ENCODE measurements at regions of chr3 and their contacts with region 1.

Region 1: DNA sequence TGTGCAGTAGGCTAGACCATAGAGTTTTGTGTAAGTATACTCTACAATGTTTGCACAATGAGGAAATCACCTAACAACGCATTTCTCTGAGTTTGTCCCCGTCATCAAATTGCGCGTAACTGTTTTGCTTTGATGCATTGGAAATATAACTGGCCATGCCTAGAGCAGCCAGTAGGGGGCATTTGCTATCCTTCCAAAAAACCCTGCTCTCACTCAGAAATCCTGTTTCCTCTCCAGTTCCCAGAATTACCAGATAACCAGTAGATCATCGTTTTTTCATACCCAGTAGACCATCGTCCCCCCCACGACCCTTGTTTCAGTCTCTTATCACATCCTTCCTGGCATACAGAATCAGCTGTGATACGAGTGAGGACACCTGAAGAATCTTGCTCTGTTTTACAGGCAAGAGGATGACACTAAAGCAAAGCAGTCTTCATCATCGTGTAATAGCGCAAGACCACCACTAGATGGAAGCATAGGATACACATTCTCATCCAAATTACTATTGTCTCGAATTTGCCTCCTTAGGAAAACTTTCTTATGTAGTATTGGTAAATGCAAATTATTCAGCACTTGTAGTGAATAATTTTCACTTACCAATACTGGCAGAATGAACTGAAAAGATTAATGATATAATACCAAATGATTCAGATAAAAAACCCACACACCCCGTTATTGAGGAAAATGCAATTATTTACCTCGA is 4.4 kb upstream of the GABRR3 start:
- DNase-seq: peak; percentile 81
- H3K4me3 Mint-ChIP-seq: peak overlapping the region; percentile 77
- H3K27ac Mint-ChIP-seq: peak overlapping the region; percentile 91
- H3K4me1 Mint-ChIP-seq: peaks cover 13% of the 10 kb centered on the region
- H3K27me3 Mint-ChIP-seq: peaks cover 13% of the 10 kb centered on the region

Region 2: DNA sequence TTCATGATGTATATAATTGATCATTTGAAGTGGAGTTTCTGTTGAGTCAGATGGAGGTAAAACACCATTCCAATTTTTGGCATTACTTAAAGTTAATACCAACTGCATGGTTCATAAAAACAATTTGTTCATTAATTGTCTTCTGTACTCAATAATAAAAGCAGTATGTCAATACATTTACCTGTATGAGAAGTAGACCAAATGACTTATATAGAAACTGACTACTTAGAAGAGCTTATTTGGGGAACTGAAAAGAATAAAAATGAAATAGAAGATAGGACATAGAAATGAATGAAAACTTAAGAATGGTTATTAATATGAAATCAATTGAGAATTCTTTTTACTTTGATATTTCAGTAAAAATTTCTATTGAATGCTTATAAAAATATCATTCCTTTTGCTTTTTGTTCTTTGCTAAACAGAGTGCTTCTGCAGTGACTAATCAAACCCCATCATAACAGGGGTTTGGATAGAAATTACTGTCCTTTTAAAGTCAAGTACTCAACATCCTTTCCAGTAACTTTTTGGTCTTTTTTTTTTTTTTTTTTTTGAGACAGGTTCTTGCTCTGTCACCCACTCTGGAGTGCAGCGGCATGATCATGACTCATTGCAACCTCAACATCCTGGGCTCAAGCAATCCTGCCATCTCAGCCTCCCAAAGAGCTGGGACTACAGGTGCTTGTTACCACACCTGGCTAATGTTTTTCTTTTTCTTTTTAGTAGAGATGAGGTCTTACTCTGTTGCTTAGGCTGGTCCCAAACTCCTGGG is 224.1 kb before region 1 on chr3:
- CTCF ChIA-PET with region 1: interaction called, 4 read pairs
- POLR2A ChIA-PET with region 1: no interaction called
- intact Hi-C with region 1: loop called (anchors 2 kb)
- DNase-seq: peak; percentile 73
- H3K4me3 Mint-ChIP-seq: no peak overlapping the region
- H3K27ac Mint-ChIP-seq: peak overlapping the region; percentile 65
- H3K4me1 Mint-ChIP-seq: peaks cover 15% of the 10 kb centered on the region
- H3K27me3 Mint-ChIP-seq: no peaks in the 10 kb centered on the region

Region 3: GRCh38 chr3:98086873-98087272 is 47.4 kb after region 1 on chr3 and contains the start of gene OR5AC2:
- CTCF ChIA-PET with region 1: no interaction called
- POLR2A ChIA-PET with region 1: no interaction called
- intact Hi-C with region 1: no loop called
- DNase-seq: no peak
- H3K4me3 Mint-ChIP-seq: no peak within 1 kb of the TSS
- H3K27ac Mint-ChIP-seq: no peak within 1 kb of the TSS
- H3K4me1 Mint-ChIP-seq: no peaks in the 10 kb centered on the region
- H3K27me3 Mint-ChIP-seq: no peaks in the 10 kb centered on the region
- total RNA-seq, gene OR5AC2: not detected

Region 4: GRCh38 chr3:98188545-98188944 is 149.1 kb after region 1 on chr3:
- CTCF ChIA-PET with region 1: interaction called, 3 read pairs
- POLR2A ChIA-PET with region 1: no interaction called
- intact Hi-C with region 1: loop called (anchors 1 kb)
- DNase-seq: no peak
- H3K4me3 Mint-ChIP-seq: no peak overlapping the region
- H3K27ac Mint-ChIP-seq: no peak overlapping the region
- H3K4me1 Mint-ChIP-seq: peaks cover 3% of the 10 kb centered on the region
- H3K27me3 Mint-ChIP-seq: no peaks in the 10 kb centered on the region

Region 5: DNA sequence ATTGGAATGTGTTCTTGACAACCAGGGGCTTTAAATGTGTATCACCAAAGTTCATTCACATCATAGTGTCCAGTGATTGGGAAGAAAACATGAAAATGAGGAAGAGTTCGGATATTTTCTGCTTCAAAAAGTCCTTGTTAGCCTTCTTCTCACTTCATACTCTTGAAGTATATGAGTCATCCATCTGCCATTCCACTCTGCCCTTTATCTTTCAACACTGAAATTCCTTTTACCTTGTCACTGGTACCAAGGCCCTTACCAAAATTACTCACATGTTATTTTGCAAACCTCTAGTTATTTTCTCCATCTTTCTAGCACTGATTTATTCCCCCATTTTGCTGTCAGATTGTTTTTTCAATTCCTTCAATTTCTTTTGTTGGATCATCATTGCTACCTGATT is 159.5 kb after region 1 on chr3:
- CTCF ChIA-PET with region 1: no interaction called
- POLR2A ChIA-PET with region 1: no interaction called
- intact Hi-C with region 1: no loop called
- DNase-seq: no peak
- H3K4me3 Mint-ChIP-seq: no peak overlapping the region
- H3K27ac Mint-ChIP-seq: no peak overlapping the region
- H3K4me1 Mint-ChIP-seq: no peaks in the 10 kb centered on the region
- H3K27me3 Mint-ChIP-seq: peaks cover 2% of the 10 kb centered on the region

Region 6: GRCh38 chr3:98522244-98523090 is 483.0 kb after region 1 on chr3 and contains the start of gene CLDND1:
- CTCF ChIA-PET with region 1: interaction called, 3 read pairs
- POLR2A ChIA-PET with region 1: no interaction called
- intact Hi-C with region 1: loop called (anchors 1 kb)
- DNase-seq: peak; percentile 98
- H3K4me3 Mint-ChIP-seq: peak within 1 kb of the TSS; percentile 91
- H3K27ac Mint-ChIP-seq: peak within 1 kb of the TSS; percentile 86
- H3K4me1 Mint-ChIP-seq: peaks cover 66% of the 10 kb centered on the region
- H3K27me3 Mint-ChIP-seq: no peaks in the 10 kb centered on the region
- total RNA-seq, gene CLDND1: 199 to 208 TPM

Region 7: GRCh38 chr3:98593046-98593936 is 553.8 kb after region 1 on chr3 and contains the start of gene CPOX:
- CTCF ChIA-PET with region 1: interaction called, 18 read pairs
- POLR2A ChIA-PET with region 1: no interaction called
- intact Hi-C with region 1: loop called (anchors 1 kb)
- DNase-seq: peak; percentile 93
- H3K4me3 Mint-ChIP-seq: peak within 1 kb of the TSS; percentile 98
- H3K27ac Mint-ChIP-seq: peak within 1 kb of the TSS; percentile 95
- H3K4me1 Mint-ChIP-seq: peaks cover 36% of the 10 kb centered on the region
- H3K27me3 Mint-ChIP-seq: no peaks in the 10 kb centered on the region
- total RNA-seq, gene CPOX: 36.0 to 39.2 TPM

Region 8: DNA sequence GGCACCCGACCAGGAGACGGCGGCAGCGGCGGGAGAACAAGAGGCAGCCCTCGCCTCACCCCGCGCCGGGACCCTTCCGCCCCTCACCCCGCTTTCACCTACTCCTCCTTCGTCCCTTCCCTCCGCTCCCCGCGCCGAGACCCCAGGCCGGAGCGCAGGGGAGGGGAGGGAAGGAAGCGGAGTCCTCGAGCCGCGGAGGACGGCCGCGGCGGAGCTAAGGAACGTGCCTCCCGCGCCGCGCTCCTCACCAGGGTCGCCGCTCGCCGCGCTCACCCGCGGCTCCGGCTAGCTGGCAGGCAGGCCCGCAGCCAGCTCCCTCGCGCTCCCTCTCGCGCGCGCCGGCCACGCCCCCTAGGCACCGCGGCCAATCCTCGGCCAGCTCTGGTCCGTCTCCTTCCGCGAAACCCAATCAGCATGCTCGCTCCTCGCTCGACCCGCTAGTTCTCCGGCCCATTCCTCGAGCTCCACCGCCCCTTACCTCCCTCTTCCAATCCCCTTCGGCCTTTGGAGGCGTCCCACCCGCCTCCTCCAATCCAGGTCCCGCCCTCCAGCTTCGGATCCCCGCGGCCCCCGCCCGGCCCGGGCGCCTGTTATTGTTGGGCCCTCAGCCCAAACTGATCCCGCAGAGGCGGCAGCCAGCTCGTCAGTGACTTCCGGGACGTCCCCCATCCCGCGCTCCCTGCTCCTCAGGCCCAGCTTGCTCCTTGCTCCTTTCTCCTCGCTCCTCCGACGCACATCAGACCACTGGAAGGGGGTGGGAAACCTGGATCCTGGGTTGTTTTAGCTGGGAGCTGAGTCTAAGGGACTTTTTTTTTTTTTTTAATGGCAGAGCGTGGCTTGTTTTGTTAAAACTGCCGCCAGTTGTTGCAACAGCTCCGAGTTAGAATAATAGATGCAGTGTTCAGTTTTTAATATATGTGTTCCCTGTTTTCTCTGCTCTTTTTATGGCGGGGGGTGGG is 862.2 kb after region 1 on chr3 and contains the start of gene DCBLD2:
- CTCF ChIA-PET with region 1: no interaction called
- POLR2A ChIA-PET with region 1: no interaction called
- intact Hi-C with region 1: loop called (anchors 5 kb)
- DNase-seq: peak; percentile 95
- H3K4me3 Mint-ChIP-seq: peak within 1 kb of the TSS; percentile 78
- H3K27ac Mint-ChIP-seq: no peak within 1 kb of the TSS
- H3K4me1 Mint-ChIP-seq: peaks cover 11% of the 10 kb centered on the region
- H3K27me3 Mint-ChIP-seq: peaks cover 5% of the 10 kb centered on the region
- total RNA-seq, gene DCBLD2: 1.2 to 1.6 TPM